Caco-2 (cell line): ENCODE measurements at regions of chr11 and their contacts with region 1.

Region 1: GRCh38 chr11:43504316-43504950 is 145.7 kb downstream of the TTC17 start:
- DNase-seq: peak in 1 of 2 experiments; percentile 42
- H3K4me3 ChIP-seq: no peak overlapping the region
- H3K4me3 Mint-ChIP-seq: no peak overlapping the region
- H3K27ac Mint-ChIP-seq: no peak overlapping the region
- H3K4me1 ChIP-seq: no peaks in the 10 kb centered on the region
- H3K4me1 Mint-ChIP-seq: no peaks in the 10 kb centered on the region
- H3K27me3 ChIP-seq: no peaks in the 10 kb centered on the region
- H3K27me3 Mint-ChIP-seq: peaks cover 16% of the 10 kb centered on the region
- CTCF ChIP-seq: peak; percentile 47 to 61

Region 2: GRCh38 chr11:43447151-43447550 is 57.3 kb before region 1 on chr11:
- CTCF ChIA-PET with region 1: no interaction called
- POLR2A ChIA-PET with region 1: no interaction called
- intact Hi-C with region 1: no loop called
- DNase-seq: no peak
- H3K4me3 ChIP-seq: no peak overlapping the region
- H3K4me3 Mint-ChIP-seq: no peak overlapping the region
- H3K27ac Mint-ChIP-seq: no peak overlapping the region
- H3K4me1 ChIP-seq: no peaks in the 10 kb centered on the region
- H3K4me1 Mint-ChIP-seq: no peaks in the 10 kb centered on the region
- H3K27me3 ChIP-seq: no peaks in the 10 kb centered on the region
- H3K27me3 Mint-ChIP-seq: no peaks in the 10 kb centered on the region
- CTCF ChIP-seq: no peak

Region 3: GRCh38 chr11:43567396-43567975 is 63.1 kb after region 1 on chr11:
- CTCF ChIA-PET with region 1: interaction called, 15 read pairs
- POLR2A ChIA-PET with region 1: no interaction called
- intact Hi-C with region 1: loop called (anchors 1 kb)
- DNase-seq: peak in 1 of 2 experiments; percentile 39
- H3K4me3 ChIP-seq: no peak overlapping the region
- H3K4me3 Mint-ChIP-seq: no peak overlapping the region
- H3K27ac Mint-ChIP-seq: no peak overlapping the region
- H3K4me1 ChIP-seq: no peaks in the 10 kb centered on the region
- H3K4me1 Mint-ChIP-seq: no peaks in the 10 kb centered on the region
- H3K27me3 ChIP-seq: no peaks in the 10 kb centered on the region; the same call in 1 of the 2 replicates
- H3K27me3 Mint-ChIP-seq: peaks cover 6% of the 10 kb centered on the region
- CTCF ChIP-seq: peak; percentile 66 to 76

Region 4: GRCh38 chr11:43573233-43573632 is 68.8 kb after region 1 on chr11:
- CTCF ChIA-PET with region 1: interaction called, 15 read pairs
- POLR2A ChIA-PET with region 1: no interaction called
- intact Hi-C with region 1: no loop called
- DNase-seq: no peak
- H3K4me3 ChIP-seq: no peak overlapping the region
- H3K4me3 Mint-ChIP-seq: no peak overlapping the region
- H3K27ac Mint-ChIP-seq: no peak overlapping the region
- H3K4me1 ChIP-seq: no peaks in the 10 kb centered on the region; the same call in 1 of the 2 replicates
- H3K4me1 Mint-ChIP-seq: peaks cover 27% of the 10 kb centered on the region
- H3K27me3 ChIP-seq: peaks cover 4% of the 10 kb centered on the region
- H3K27me3 Mint-ChIP-seq: peaks cover 40% of the 10 kb centered on the region
- CTCF ChIP-seq: peak; percentile 61 to 66

Region 5: GRCh38 chr11:43708776-43709175 is 204.3 kb after region 1 on chr11:
- CTCF ChIA-PET with region 1: interaction called, 9 read pairs
- POLR2A ChIA-PET with region 1: no interaction called
- intact Hi-C with region 1: loop called (anchors 1 kb)
- DNase-seq: peak in 1 of 2 experiments; percentile 16
- H3K4me3 ChIP-seq: no peak overlapping the region
- H3K4me3 Mint-ChIP-seq: no peak overlapping the region
- H3K27ac Mint-ChIP-seq: no peak overlapping the region
- H3K4me1 ChIP-seq: no peaks in the 10 kb centered on the region
- H3K4me1 Mint-ChIP-seq: no peaks in the 10 kb centered on the region
- H3K27me3 ChIP-seq: no peaks in the 10 kb centered on the region
- H3K27me3 Mint-ChIP-seq: no peaks in the 10 kb centered on the region
- CTCF ChIP-seq: peak in 1 of 2 experiments; percentile 35

Region 6: DNA sequence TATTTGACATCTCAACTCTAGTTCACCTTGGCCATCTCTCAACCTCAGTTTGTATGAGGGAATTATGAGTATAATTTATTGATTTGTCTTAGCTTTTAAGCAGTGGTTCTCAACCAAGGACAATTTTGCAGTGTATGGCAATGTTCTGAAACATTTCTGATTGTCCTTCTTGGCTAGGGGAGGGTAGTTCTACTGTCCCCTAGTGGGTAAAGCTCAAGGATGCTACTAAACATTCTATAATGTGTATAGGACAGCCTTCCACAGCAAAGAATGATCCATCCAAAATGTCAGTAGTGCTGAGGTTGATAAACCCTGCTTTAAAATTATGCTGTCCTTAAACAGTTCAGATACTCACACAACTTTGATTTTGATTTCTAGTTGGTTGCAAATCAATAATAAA is 298.1 kb after region 1 on chr11:
- CTCF ChIA-PET with region 1: no interaction called
- POLR2A ChIA-PET with region 1: no interaction called
- intact Hi-C with region 1: loop called (anchors 10 kb)
- DNase-seq: peak in 1 of 2 experiments; percentile 22
- H3K4me3 ChIP-seq: no peak overlapping the region
- H3K4me3 Mint-ChIP-seq: no peak overlapping the region
- H3K27ac Mint-ChIP-seq: no peak overlapping the region
- H3K4me1 ChIP-seq: no peaks in the 10 kb centered on the region
- H3K4me1 Mint-ChIP-seq: no peaks in the 10 kb centered on the region
- H3K27me3 ChIP-seq: no peaks in the 10 kb centered on the region
- H3K27me3 Mint-ChIP-seq: no peaks in the 10 kb centered on the region
- CTCF ChIP-seq: peak; percentile 37 to 63

Region 7: GRCh38 chr11:43852057-43852636 is 347.7 kb after region 1 on chr11:
- CTCF ChIA-PET with region 1: interaction called, 19 read pairs
- POLR2A ChIA-PET with region 1: no interaction called
- intact Hi-C with region 1: loop called (anchors 5 kb)
- DNase-seq: peak; percentile 68 to 70
- H3K4me3 ChIP-seq: no peak overlapping the region
- H3K4me3 Mint-ChIP-seq: no peak overlapping the region
- H3K27ac Mint-ChIP-seq: no peak overlapping the region
- H3K4me1 ChIP-seq: no peaks in the 10 kb centered on the region
- H3K4me1 Mint-ChIP-seq: no peaks in the 10 kb centered on the region
- H3K27me3 ChIP-seq: no peaks in the 10 kb centered on the region
- H3K27me3 Mint-ChIP-seq: no peaks in the 10 kb centered on the region
- CTCF ChIP-seq: peak; percentile 73 to 81